Dorsolateral prefrontal cortex (tissue), 120 donors: ENCODE measurements at regions of chr4 and their contacts with region 1.

Region 1: GRCh38 chr4:20428436-20429160 is 176.9 kb downstream of the SLIT2 start:
- DNase-seq: no peak
- H3K4me3 ChIP-seq: no peak overlapping the region
- H3K27ac ChIP-seq: no peak overlapping the region
- H3K27me3 ChIP-seq: no peaks in the 10 kb centered on the region
- CTCF ChIP-seq: peak in 53 of 56 donors; percentile 27 to 81 (median 56)

Region 2: DNA sequence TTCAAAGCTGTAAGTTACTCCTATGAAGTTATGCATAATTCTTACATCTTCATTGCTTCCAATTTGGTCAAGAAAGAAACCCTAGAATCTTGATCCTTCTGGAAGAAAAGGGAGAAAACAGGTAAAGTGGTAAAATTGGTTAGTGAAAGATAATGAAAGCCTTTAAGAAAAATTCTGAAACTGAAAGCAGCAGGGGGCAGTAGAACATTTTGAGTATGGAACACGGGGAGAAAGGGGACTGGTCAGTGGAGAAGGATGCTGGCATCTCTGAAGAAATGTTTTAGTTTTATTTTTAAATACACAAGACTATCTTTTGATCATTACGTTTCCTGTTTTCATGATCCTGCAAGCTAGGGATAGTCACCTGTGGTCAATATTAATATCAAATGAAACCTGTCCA is 122.6 kb before region 1 on chr4:
- intact Hi-C with region 1: loop called (anchors 1 to 5 kb)
- DNase-seq: no peak
- H3K4me3 ChIP-seq: peak overlapping the region in 2 of 59 donors; percentile 9 to 15
- H3K27ac ChIP-seq: peak overlapping the region in 22 of 59 donors; percentile 0 to 70 (median 26)
- H3K27me3 ChIP-seq: no peaks in the 10 kb centered on the region
- CTCF ChIP-seq: peak; percentile 25 to 91 (median 66)